K562 (cell line): ENCODE measurements at regions of chr6 and their contacts with region 1.

Region 1: DNA sequence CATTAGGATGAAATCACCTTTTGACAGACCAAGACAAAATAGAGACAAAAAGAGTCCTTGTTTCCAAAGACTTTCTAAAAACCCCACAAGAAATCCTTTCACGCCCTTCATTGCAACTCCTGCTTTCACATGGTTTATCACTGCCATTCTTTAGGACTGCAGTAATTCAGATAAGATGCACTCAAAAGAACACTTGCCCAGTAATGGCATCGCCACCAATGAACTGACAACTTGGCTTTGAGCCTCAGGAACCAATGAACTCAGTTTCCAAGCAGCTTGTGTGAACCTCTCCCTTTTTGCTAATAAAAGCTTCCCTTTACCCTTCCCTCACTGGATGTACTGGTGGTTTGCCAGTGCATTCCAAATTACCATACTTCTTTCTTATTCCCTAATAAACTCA is 21.8 kb downstream of the OSTM1 start:
- DNase-seq: no peak
- ATAC-seq: no peak
- H3K4me3 ChIP-seq: no peak overlapping the region
- H3K27ac ChIP-seq: no peak overlapping the region
- H3K4me1 ChIP-seq: peaks cover 0 to 3% of the 10 kb centered on the region in 2 experiments; a peak in 2 of 5 replicates
- H3K27me3 ChIP-seq: no peaks in the 10 kb centered on the region
- CTCF ChIP-seq: no peak
- EP300 ChIP-seq: no peak
- POLR2A ChIP-seq: no peak
- RAD21 ChIP-seq: no peak

Region 2: DNA sequence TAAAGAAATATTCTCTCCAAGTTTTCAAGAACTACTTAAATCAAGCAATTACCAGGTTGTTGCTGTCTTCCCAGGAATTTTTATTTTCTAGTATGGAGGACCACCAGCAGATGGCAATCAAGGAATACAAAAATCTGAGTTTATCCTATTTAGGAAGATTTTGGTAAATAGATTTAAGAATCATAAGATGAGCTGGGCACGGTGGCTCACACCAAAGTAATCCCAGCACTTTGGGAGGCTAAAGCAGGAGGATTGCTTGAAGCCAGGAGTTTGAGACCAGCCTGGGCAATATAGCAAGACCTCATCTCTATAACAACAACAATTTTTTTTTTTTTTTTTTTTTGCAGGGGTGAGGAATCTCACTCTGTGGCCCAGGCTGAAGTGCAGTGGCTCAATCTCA is 75.4 kb before region 1 on chr6:
- CTCF ChIA-PET with region 1: interaction called, 39 read pairs
- POLR2A ChIA-PET with region 1: no interaction called
- in situ Hi-C with region 1: no loop called
- intact Hi-C with region 1: loop called (anchors 1 kb)
- DNase-seq: peak in 1 of 4 experiments; percentile 29
- ATAC-seq: no peak
- H3K4me3 ChIP-seq: no peak overlapping the region
- H3K27ac ChIP-seq: no peak overlapping the region
- H3K4me1 ChIP-seq: peaks cover 0 to 3% of the 10 kb centered on the region in 2 experiments; a peak in 1 of 5 replicates
- H3K27me3 ChIP-seq: no peaks in the 10 kb centered on the region
- CTCF ChIP-seq: peak in 2 of 3 experiments; percentile 40 to 64; a peak in 4 of 6 replicates
- EP300 ChIP-seq: no peak
- POLR2A ChIP-seq: no peak
- RAD21 ChIP-seq: peak; percentile 38 to 71; a peak in 3 of 4 replicates

Region 3: GRCh38 chr6:107982486-107982885 is 70.2 kb before region 1 on chr6:
- CTCF ChIA-PET with region 1: interaction called, 39 read pairs
- POLR2A ChIA-PET with region 1: interaction called, 3 read pairs
- in situ Hi-C with region 1: no loop called
- intact Hi-C with region 1: loop called (anchors 1 kb)
- DNase-seq: no peak
- ATAC-seq: no peak; the same call in 2 of the 3 replicates
- H3K4me3 ChIP-seq: no peak overlapping the region
- H3K27ac ChIP-seq: no peak overlapping the region
- H3K4me1 ChIP-seq: peaks cover 3 to 5% of the 10 kb centered on the region in 2 experiments; a peak in 3 of 5 replicates
- H3K27me3 ChIP-seq: no peaks in the 10 kb centered on the region
- CTCF ChIP-seq: no peak
- EP300 ChIP-seq: no peak
- POLR2A ChIP-seq: no peak
- RAD21 ChIP-seq: no peak

Region 4: DNA sequence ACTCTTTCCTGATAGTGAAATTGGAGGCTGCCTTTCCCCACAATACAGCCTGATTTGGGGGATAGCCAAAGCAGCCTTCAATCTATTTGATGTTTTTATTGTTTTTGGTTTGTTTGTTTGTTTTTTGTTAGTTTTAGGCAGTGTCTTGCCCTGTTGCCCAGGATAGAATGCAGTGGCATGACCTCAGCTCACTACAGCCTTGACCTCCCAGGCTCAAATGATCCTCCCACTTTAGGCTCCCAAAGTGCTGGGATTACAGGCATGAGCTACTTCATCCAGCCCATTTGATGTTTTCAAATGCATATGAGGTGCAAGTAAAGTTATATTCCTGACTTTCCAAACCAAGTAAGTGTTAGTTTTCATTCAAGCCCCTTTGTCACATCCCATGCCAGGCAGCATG is 53.4 kb before region 1 on chr6:
- CTCF ChIA-PET with region 1: no interaction called
- POLR2A ChIA-PET with region 1: no interaction called
- in situ Hi-C with region 1: loop called (anchors 5 kb)
- intact Hi-C with region 1: no loop called
- DNase-seq: no peak
- ATAC-seq: no peak
- H3K4me3 ChIP-seq: no peak overlapping the region
- H3K27ac ChIP-seq: no peak overlapping the region
- H3K4me1 ChIP-seq: no peaks in the 10 kb centered on the region; a peak in 1 of 5 replicates
- H3K27me3 ChIP-seq: no peaks in the 10 kb centered on the region
- CTCF ChIP-seq: no peak
- EP300 ChIP-seq: no peak
- POLR2A ChIP-seq: no peak
- RAD21 ChIP-seq: no peak